Activated B cell treated with CpG ODN at 0.5 μM for 24 hours (primary cell): ENCODE measurements at regions of chr19 and their contacts with region 1.

Region 1: DNA sequence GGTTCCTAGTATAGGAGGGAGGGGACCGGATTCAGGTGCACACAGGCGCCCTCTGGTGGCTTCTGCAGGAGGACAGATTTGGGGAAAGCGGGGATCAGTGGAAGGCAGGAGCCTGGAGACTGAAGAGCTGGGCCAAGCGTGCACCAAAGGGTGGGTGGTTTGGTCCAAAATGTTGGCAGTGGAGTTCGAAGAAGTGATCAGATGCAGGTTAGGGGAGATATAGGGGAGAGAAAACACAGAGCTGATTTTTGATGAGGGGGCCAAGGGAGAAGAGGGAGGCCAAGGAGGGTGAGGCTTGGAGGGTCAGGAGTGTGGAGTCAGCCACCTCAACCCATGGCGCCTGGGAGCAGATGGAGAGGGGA is 6.8 kb upstream of the CARM1 start:
- DNase-seq: peak; percentile 68
- ATAC-seq: peak; percentile 68
- H3K4me3 Mint-ChIP-seq: peak overlapping the region; percentile 21
- H3K27ac Mint-ChIP-seq: peak overlapping the region; percentile 8
- H3K4me1 Mint-ChIP-seq: peaks cover 28% of the 10 kb centered on the region
- H3K27me3 Mint-ChIP-seq: no peaks in the 10 kb centered on the region
- CTCF ChIP-seq: peak; percentile 27

Region 2: DNA sequence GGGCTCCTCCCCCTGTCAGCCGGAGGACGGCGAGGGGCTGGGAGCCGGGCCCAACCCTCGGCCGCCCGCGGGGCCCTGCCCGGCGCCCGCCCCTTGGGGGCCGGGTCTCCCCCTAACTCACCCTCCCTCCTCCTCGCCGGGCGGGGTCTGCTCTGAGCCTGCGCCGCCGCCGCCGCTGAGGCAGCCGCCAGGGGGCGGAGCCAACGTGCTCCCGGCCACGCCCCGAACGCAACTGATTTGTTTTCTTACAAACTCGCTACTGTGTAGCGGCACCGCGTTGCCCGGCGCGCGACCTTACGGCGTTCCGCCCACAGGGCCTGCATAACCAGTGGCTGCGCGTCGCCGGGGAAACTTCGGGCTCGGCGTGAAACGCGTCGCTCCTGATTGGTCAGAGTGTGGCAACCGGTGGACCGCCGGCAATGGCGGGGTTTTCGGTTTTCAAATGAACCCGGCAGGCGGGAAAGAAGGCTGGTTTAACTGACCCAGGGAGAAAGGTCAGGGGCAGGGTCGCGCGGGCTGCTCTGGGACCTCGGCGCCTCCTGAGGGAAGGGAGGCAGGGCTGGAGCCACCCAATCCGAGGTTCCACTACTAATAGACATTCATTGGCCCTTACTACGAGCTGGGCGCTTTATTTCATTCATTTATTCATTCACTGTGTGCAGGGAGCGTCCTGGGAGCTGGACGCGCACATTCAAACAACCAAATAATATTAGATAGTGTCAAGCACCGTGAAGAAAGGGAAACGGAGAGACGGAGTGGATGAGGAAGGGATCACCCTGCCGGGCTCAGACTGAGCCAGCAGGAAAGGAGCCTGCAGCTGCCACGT is 295.5 kb before region 1 on chr19 and contains the start of gene CDKN2D:
- CTCF ChIA-PET with region 1: no interaction called
- POLR2A ChIA-PET with region 1: no interaction called
- intact Hi-C with region 1: no loop called
- DNase-seq: peak; percentile 99
- ATAC-seq: peak; percentile 70
- H3K4me3 Mint-ChIP-seq: peak within 1 kb of the TSS; percentile 95
- H3K27ac Mint-ChIP-seq: peak within 1 kb of the TSS; percentile 98
- H3K4me1 Mint-ChIP-seq: peaks cover 50% of the 10 kb centered on the region
- H3K27me3 Mint-ChIP-seq: no peaks in the 10 kb centered on the region
- CTCF ChIP-seq: no peak
- total RNA-seq, gene CDKN2D: 10.1 and 10.9 TPM in 2 replicates

Region 3: DNA sequence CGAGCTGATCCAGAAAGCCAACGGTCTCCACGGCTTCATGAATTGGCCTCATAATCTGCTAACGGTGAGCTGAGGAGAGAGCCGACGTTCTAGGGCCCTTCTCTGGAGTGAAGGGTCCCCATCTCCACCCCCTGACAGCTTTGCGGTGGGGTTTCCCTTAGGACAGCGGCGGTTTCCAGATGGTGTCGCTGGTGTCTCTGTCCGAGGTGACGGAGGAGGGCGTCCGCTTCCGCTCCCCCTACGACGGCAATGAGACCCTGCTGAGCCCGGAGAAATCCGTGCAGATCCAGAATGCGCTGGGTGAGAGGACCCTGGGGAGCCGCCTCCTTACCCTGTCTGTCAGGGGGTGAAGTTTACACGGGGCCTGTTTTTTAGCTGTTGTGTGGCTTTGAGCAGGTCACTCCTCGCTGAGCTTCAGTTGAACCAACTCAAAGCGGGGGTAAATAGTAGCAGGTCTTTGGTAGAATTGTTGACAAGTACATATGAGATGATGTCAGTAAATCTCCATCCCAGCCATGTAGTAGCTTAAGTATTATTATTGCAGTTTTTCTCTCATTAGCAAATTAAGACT is 162.5 kb before region 1 on chr19:
- CTCF ChIA-PET with region 1: interaction called, 13 read pairs
- POLR2A ChIA-PET with region 1: interaction called, 9 read pairs
- intact Hi-C with region 1: no loop called
- DNase-seq: peak; percentile 31
- ATAC-seq: peak; percentile 29
- H3K4me3 Mint-ChIP-seq: peak overlapping the region; percentile 93
- H3K27ac Mint-ChIP-seq: peak overlapping the region; percentile 85
- H3K4me1 Mint-ChIP-seq: peaks cover 12% of the 10 kb centered on the region
- H3K27me3 Mint-ChIP-seq: peaks cover 2% of the 10 kb centered on the region
- CTCF ChIP-seq: no peak

Region 4: GRCh38 chr19:10737722-10738121 is 126.8 kb before region 1 on chr19:
- CTCF ChIA-PET with region 1: no interaction called
- POLR2A ChIA-PET with region 1: no interaction called
- intact Hi-C with region 1: no loop called
- DNase-seq: no peak
- ATAC-seq: peak; percentile 49
- H3K4me3 Mint-ChIP-seq: no peak overlapping the region
- H3K27ac Mint-ChIP-seq: peak overlapping the region; percentile 83
- H3K4me1 Mint-ChIP-seq: peaks cover 74% of the 10 kb centered on the region
- H3K27me3 Mint-ChIP-seq: no peaks in the 10 kb centered on the region
- CTCF ChIP-seq: no peak